Endothelial cell of umbilical vein (primary cell): ENCODE measurements at regions of chr4 and their contacts with region 1.

Region 1: GRCh38 chr4:8241895-8242696 is 27.5 kb upstream of the HTRA3 start:
- DNase-seq: peak; percentile 71
- H3K4me3 ChIP-seq: no peak overlapping the region
- H3K27ac ChIP-seq: peak overlapping the region; percentile 36
- H3K4me1 ChIP-seq: no peaks in the 10 kb centered on the region
- H3K27me3 ChIP-seq: no peaks in the 10 kb centered on the region
- CTCF ChIP-seq: peak; percentile 94 to 98
- POLR2A ChIP-seq: no peak

Region 2: DNA sequence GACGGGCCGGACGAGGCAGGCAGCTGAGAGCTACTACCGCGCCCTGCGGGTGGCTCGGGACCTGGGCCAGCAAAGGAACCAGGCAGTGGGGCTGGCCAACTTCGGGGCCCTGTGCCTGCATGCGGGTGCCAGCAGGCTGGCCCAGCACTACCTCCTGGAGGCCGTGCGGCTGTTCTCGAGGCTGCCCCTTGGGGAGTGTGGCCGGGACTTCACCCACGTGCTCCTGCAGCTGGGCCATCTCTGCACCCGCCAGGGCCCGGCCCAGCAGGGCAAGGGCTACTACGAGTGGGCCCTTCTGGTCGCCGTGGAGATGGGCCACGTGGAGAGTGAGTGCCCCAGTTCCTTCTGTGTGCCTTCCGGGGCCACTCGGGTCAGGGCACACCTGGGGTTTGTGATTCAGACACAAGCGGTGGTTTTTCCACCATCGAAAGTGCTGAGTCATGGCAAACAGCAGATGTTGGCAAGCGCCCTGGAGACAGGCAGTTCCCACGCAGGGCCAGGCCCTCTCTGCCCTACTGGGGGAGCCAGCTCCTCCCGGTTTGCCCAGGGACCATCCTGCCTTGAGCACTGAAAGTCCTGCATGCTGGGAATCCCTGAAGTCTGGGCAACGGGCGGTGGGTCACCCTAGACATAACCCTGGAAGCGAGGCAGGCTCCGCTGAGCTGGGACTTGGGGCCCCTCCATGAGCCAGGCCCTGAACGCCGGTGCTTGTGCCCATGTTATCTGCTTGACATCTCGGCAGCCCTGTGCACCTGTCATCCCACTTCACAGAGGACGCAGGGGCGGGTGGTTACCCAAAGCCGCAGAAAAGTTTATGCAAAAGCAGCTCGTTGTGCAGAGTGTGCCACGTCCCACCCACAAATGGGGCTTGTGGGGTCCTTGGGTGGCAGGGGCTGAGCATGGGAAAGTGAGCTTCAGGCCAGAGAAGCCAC is 13.5 kb before region 1 on chr4:
- CTCF ChIA-PET with region 1: interaction called, 11 read pairs
- POLR2A ChIA-PET with region 1: no interaction called
- dilution Hi-C with region 1: no loop called
- intact Hi-C with region 1: no loop called
- DNase-seq: peak; percentile 88
- H3K4me3 ChIP-seq: no peak overlapping the region
- H3K27ac ChIP-seq: peak overlapping the region; percentile 50
- H3K4me1 ChIP-seq: peaks cover 6% of the 10 kb centered on the region
- H3K27me3 ChIP-seq: no peaks in the 10 kb centered on the region
- CTCF ChIP-seq: no peak
- POLR2A ChIP-seq: no peak

Region 3: GRCh38 chr4:8410641-8411271 is 168.7 kb after region 1 on chr4:
- CTCF ChIA-PET with region 1: interaction called, 155 read pairs
- POLR2A ChIA-PET with region 1: interaction called, 6 read pairs
- dilution Hi-C with region 1: no loop called
- intact Hi-C with region 1: loop called (anchors 1 kb)
- DNase-seq: peak; percentile 94
- H3K4me3 ChIP-seq: no peak overlapping the region
- H3K27ac ChIP-seq: no peak overlapping the region
- H3K4me1 ChIP-seq: no peaks in the 10 kb centered on the region
- H3K27me3 ChIP-seq: no peaks in the 10 kb centered on the region
- CTCF ChIP-seq: peak; percentile 63 to 72
- POLR2A ChIP-seq: no peak

Region 4: DNA sequence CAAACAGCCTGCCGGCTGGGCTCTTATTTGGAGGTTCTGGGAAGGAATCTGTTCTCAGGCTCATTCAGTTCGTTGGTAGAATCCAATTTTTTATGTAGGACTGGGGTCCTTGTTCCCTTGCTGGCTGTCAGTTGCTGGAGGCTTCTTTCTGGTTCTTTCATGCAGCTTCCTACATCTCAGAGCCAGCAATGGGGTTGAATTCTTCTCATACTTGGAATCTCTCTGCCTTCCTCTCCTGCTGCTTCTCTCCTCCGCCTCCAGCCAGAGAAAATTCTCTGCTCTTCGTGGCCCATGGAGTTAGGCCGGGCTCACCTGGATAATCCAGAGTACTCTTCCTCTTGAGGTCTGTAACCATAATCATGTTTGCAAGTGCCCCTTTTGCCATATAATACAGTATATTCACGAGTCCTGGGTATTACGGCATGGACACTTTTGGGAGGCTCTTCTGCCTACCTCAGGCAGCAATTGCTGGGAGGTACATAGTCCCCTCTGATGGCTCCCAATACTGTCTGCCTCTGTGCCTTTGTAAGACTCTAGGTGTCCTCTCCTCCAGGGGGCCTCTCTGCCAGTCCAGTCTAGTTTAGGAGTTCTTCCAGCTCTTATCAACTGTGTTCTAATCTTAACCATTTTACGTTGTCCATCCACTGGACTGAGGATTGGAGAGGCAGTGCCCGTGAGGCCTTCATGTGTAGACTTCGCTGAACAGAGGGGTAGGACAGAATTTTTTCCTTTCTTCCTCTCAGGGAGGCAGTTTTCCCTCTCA is 200.7 kb after region 1 on chr4:
- CTCF ChIA-PET with region 1: no interaction called
- POLR2A ChIA-PET with region 1: no interaction called
- dilution Hi-C with region 1: no loop called
- intact Hi-C with region 1: no loop called
- DNase-seq: no peak
- H3K4me3 ChIP-seq: no peak overlapping the region
- H3K27ac ChIP-seq: no peak overlapping the region
- H3K4me1 ChIP-seq: peaks cover 32% of the 10 kb centered on the region
- H3K27me3 ChIP-seq: no peaks in the 10 kb centered on the region
- CTCF ChIP-seq: no peak
- POLR2A ChIP-seq: no peak